Body of pancreas (tissue), 4 donors: ENCODE measurements at regions of chr6 and their contacts with region 1.

Region 1: GRCh38 chr6:39979461-39980328 is 45.4 kb upstream of the MOCS1 start:
- DNase-seq: no peak
- ATAC-seq: no peak
- H3K4me3 ChIP-seq: no peak overlapping the region
- H3K27ac ChIP-seq: no peak overlapping the region
- H3K4me1 ChIP-seq: peaks cover 6% of the 10 kb centered on the region
- H3K27me3 ChIP-seq: no peaks in the 10 kb centered on the region
- CTCF ChIP-seq: no peak
- POLR2A ChIP-seq: no peak

Region 2: DNA sequence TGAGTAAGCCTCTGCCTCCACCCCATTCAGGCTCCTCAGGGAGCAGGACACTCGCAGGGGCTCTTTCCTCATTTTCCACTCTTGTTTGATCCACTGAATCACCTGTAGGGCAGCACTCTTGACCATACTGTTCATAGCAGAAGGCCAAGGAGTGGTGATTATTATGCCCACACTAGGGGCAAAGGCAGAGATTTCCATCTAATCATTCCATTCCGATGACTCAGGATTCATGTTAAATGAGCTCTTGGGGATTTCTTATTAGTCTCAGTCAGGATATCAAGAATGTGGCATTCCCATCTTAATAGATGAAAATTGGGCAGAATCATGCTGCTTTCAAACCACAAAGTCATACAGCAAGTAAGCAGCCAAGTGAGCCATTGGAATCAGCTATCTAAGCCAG is 56.5 kb after region 1 on chr6:
- intact Hi-C with region 1: no loop called
- DNase-seq: no peak
- ATAC-seq: no peak
- H3K4me3 ChIP-seq: no peak overlapping the region
- H3K27ac ChIP-seq: no peak overlapping the region
- H3K4me1 ChIP-seq: no peaks in the 10 kb centered on the region
- H3K27me3 ChIP-seq: no peaks in the 10 kb centered on the region
- CTCF ChIP-seq: no peak
- POLR2A ChIP-seq: no peak

Region 3: GRCh38 chr6:40308533-40309306 is 329.0 kb after region 1 on chr6:
- intact Hi-C with region 1: loop called (anchors 5 kb)
- DNase-seq: peak; percentile 63 to 80 (median 75)
- ATAC-seq: peak; percentile 81
- H3K4me3 ChIP-seq: no peak overlapping the region
- H3K27ac ChIP-seq: no peak overlapping the region
- H3K4me1 ChIP-seq: peaks cover 5% of the 10 kb centered on the region
- H3K27me3 ChIP-seq: no peaks in the 10 kb centered on the region
- CTCF ChIP-seq: peak; percentile 88 to 97 (median 91)
- POLR2A ChIP-seq: no peak